ENCODE measurements at regions of chr9 and their contacts with region 1.

Region 1: GRCh38 chr9:104991144-104991953 is 63.4 kb upstream of the ABCA1 start:
- DNase-seq: peak; percentile 75 to 88
- H3K4me3 ChIP-seq: peak overlapping the region; percentile 84
- H3K27ac ChIP-seq: peak overlapping the region; percentile 99
- H3K4me1 ChIP-seq: peaks cover 52% of the 10 kb centered on the region
- H3K27me3 ChIP-seq: no peaks in the 10 kb centered on the region
- CTCF ChIP-seq: no peak

Region 2: GRCh38 chr9:104863180-104863883 is 128.0 kb before region 1 on chr9:
- CTCF ChIA-PET with region 1: no interaction called
- POLR2A ChIA-PET with region 1: no interaction called
- intact Hi-C with region 1: loop called (anchors 2 kb)
- DNase-seq: peak; percentile 56
- H3K4me3 ChIP-seq: no peak overlapping the region
- H3K27ac ChIP-seq: peak overlapping the region; percentile 21; the same call in 1 of the 2 replicates
- H3K4me1 ChIP-seq: peaks cover 50% of the 10 kb centered on the region
- H3K27me3 ChIP-seq: no peaks in the 10 kb centered on the region
- CTCF ChIP-seq: peak; percentile 84

Region 3: GRCh38 chr9:104968025-104968982 is 23.0 kb before region 1 on chr9:
- CTCF ChIA-PET with region 1: interaction called, 3 read pairs
- POLR2A ChIA-PET with region 1: no interaction called
- intact Hi-C with region 1: loop called (anchors 1 kb)
- DNase-seq: peak; percentile 74 to 91
- H3K4me3 ChIP-seq: peak overlapping the region; percentile 99
- H3K27ac ChIP-seq: peak overlapping the region; percentile 85
- H3K4me1 ChIP-seq: peaks cover 26% of the 10 kb centered on the region
- H3K27me3 ChIP-seq: no peaks in the 10 kb centered on the region
- CTCF ChIP-seq: no peak

Region 4: GRCh38 chr9:105007143-105007542 is 15.8 kb after region 1 on chr9:
- CTCF ChIA-PET with region 1: no interaction called
- POLR2A ChIA-PET with region 1: interaction called, 3 read pairs
- intact Hi-C with region 1: loop called (anchors 2 kb)
- DNase-seq: peak; percentile 39 to 94
- H3K4me3 ChIP-seq: peak overlapping the region; percentile 16; the same call in 1 of the 2 replicates
- H3K27ac ChIP-seq: peak overlapping the region; percentile 92
- H3K4me1 ChIP-seq: peaks cover 32% of the 10 kb centered on the region
- H3K27me3 ChIP-seq: no peaks in the 10 kb centered on the region
- CTCF ChIP-seq: no peak

Region 5: DNA sequence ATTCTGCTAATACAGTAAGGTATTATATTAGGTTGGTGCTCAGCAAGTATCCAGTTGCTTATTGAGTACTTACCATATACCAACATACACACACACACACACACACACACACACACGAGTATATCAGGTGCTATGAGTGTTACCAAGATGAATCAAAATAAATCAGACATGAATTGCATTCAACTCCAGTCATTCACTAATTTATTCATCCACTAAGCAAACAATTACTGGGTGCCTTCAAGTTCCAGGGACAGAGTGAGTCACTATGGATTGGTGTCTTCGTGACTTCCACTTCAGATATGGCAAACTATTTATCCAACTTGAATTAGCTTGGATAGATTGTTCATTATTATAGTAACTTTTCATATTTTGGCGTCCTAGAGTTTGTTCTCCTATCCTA is 112.4 kb after region 1 on chr9:
- CTCF ChIA-PET with region 1: no interaction called
- POLR2A ChIA-PET with region 1: no interaction called
- intact Hi-C with region 1: no loop called
- DNase-seq: peak in 1 of 2 experiments; percentile 86
- H3K4me3 ChIP-seq: no peak overlapping the region
- H3K27ac ChIP-seq: peak overlapping the region; percentile 34; the same call in 1 of the 2 replicates
- H3K4me1 ChIP-seq: peaks cover 12% of the 10 kb centered on the region
- H3K27me3 ChIP-seq: no peaks in the 10 kb centered on the region
- CTCF ChIP-seq: no peak

Region 6: DNA sequence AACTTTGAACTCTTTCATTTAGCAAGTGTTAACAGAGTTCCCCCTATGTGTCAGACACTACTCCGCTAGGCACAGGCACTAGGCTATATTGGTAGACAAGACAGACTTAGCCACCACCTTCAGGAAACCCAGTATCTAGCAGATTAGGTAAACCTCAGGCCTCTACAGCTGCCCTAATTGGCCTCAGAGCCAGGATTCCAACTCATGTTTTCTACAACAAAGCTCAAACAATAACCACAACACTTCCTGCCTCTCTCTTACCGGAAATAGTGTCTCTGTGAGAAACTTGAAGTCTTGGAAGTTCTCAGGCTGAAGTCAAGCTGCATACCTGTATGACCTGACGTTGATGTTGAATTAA is 136.5 kb after region 1 on chr9:
- CTCF ChIA-PET with region 1: no interaction called
- POLR2A ChIA-PET with region 1: no interaction called
- intact Hi-C with region 1: loop called (anchors 2 kb)
- DNase-seq: peak; percentile 36 to 74
- H3K4me3 ChIP-seq: no peak overlapping the region
- H3K27ac ChIP-seq: peak overlapping the region; percentile 70
- H3K4me1 ChIP-seq: peaks cover 35% of the 10 kb centered on the region
- H3K27me3 ChIP-seq: no peaks in the 10 kb centered on the region
- CTCF ChIP-seq: no peak

Region 7: GRCh38 chr9:105290398-105290797 is 299.0 kb after region 1 on chr9:
- CTCF ChIA-PET with region 1: no interaction called
- POLR2A ChIA-PET with region 1: no interaction called
- intact Hi-C with region 1: loop called (anchors 5 kb)
- DNase-seq: peak; percentile 41 to 81
- H3K4me3 ChIP-seq: no peak overlapping the region
- H3K27ac ChIP-seq: peak overlapping the region; percentile 73
- H3K4me1 ChIP-seq: peaks cover 36% of the 10 kb centered on the region
- H3K27me3 ChIP-seq: no peaks in the 10 kb centered on the region
- CTCF ChIP-seq: no peak

Measured in PC-9 (cell line).